K562 (cell line): ENCODE measurements at regions of chr15 and their contacts with region 1.

Region 1: GRCh38 chr15:72473614-72474465 is at the start of gene ARIH1:
- DNase-seq: peak; percentile 89 to 97 (median 90)
- ATAC-seq: peak; percentile 91
- H3K4me3 ChIP-seq: peak within 1 kb of the TSS; percentile 76
- H3K27ac ChIP-seq: peak within 1 kb of the TSS; percentile 96
- H3K4me1 ChIP-seq: peaks cover 7 to 15% of the 10 kb centered on the region in 2 experiments; a peak in 4 of 5 replicates
- H3K27me3 ChIP-seq: no peaks in the 10 kb centered on the region
- CTCF ChIP-seq: peak; percentile 45 to 74 (median 63)
- EP300 ChIP-seq: no peak
- POLR2A ChIP-seq: peak; percentile 97
- RAD21 ChIP-seq: peak in 1 of 2 experiments; percentile 39; a peak in 1 of 4 replicates
- polyA plus RNA-seq, gene ARIH1: 17.7 to 18.0 TPM

Region 2: DNA sequence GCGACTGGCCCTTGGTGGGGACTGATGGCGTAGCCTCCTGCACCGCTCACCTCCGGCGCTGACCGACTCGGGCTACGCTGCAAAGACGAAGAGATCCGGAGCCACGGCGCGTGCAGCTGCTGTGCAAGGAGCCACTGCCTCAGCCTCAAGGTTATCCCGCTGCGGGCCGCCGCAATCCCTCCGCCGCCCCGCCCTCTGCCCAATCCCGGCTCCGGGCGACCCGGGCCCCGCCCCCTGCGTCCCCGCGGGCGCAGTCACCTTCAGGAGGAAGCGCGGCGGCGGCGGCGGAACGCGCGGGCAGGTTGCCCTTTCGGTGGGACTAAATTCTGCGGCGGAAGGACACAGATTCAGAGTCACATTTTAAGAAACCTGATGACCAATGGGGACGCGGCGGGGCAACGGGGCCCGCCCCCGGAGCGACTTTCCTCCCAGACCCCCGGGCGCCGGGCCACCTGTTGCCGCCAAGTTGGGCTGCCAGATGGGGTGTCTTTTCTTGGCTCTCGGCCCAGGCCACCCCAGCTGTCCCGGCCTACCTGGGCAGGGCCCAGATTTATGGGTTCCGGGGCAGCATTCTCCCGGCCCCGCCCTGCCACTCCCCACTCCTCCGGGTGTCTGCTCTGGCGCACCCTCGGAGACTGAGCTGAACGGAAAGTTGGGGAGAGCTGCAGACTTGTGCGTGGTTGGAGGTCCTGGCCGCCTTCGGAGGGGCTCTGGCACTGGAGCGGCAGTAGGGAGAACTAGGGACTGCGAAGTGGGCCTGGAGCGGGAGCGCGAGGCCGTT is 242.6 kb before region 1 on chr15 and contains the start of gene PKM:
- CTCF ChIA-PET with region 1: no interaction called
- POLR2A ChIA-PET with region 1: no interaction called
- in situ Hi-C with region 1: no loop called
- intact Hi-C with region 1: loop called (anchors 10 kb)
- DNase-seq: peak; percentile 89 to 96 (median 92)
- ATAC-seq: peak; percentile 78
- H3K4me3 ChIP-seq: peak within 1 kb of the TSS; percentile 67
- H3K27ac ChIP-seq: peak within 1 kb of the TSS; percentile 88
- H3K4me1 ChIP-seq: peaks cover 50 to 70% of the 10 kb centered on the region in 2 experiments
- H3K27me3 ChIP-seq: no peaks in the 10 kb centered on the region
- CTCF ChIP-seq: no peak
- EP300 ChIP-seq: peak; percentile 48; the same call in 1 of the 2 replicates
- POLR2A ChIP-seq: peak; percentile 93
- RAD21 ChIP-seq: no peak
- polyA plus RNA-seq, gene PKM: 140 to 308 TPM

Region 3: GRCh38 chr15:72397796-72398588 is 75.8 kb before region 1 on chr15 and contains the start of gene TMEM202:
- CTCF ChIA-PET with region 1: no interaction called
- POLR2A ChIA-PET with region 1: no interaction called
- in situ Hi-C with region 1: no loop called
- intact Hi-C with region 1: no loop called
- DNase-seq: no peak
- ATAC-seq: no peak
- H3K4me3 ChIP-seq: no peak within 1 kb of the TSS
- H3K27ac ChIP-seq: no peak within 1 kb of the TSS
- H3K4me1 ChIP-seq: no peaks in the 10 kb centered on the region
- H3K27me3 ChIP-seq: peaks cover 11 to 16% of the 10 kb centered on the region in 2 experiments
- CTCF ChIP-seq: no peak
- EP300 ChIP-seq: no peak
- POLR2A ChIP-seq: no peak
- RAD21 ChIP-seq: no peak
- polyA plus RNA-seq, gene TMEM202: not detected